ENCODE measurements at regions of chrX and their contacts with region 1.

Region 1: GRCh38 chrX:22041907-22042530 is 9.9 kb downstream of the PHEX start:
- DNase-seq: no peak
- H3K4me3 ChIP-seq: no peak overlapping the region
- H3K4me3 Mint-ChIP-seq: no peak overlapping the region
- H3K27ac ChIP-seq: no peak overlapping the region
- H3K27ac Mint-ChIP-seq: no peak overlapping the region
- H3K4me1 ChIP-seq: no peaks in the 10 kb centered on the region
- H3K4me1 Mint-ChIP-seq: peaks cover 4% of the 10 kb centered on the region
- H3K27me3 ChIP-seq: no peaks in the 10 kb centered on the region
- H3K27me3 Mint-ChIP-seq: peaks cover 1 to 16% (median 3%) of the 10 kb centered on the region in 3 donors
- CTCF ChIP-seq: no peak

Region 2: DNA sequence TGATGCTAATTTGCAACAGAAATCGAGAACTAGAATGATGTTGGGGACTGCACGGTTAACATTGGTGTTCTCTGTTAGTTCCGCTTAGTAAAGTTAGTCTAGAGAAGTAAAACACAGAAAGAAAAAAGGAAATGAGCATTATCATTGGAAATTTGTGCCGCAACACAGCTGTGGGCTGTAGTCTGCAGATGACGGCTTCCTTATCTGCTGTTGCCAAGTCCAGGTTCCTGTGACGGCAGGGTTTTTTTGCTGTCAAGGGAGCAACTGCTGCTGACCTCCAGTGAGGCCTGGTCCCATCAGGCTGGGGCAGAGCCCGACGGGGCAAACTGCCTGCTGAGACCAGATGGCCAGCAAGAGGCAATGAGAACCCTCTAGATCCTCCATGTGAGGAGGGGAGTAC is 48.8 kb before region 1 on chrX:
- intact Hi-C with region 1: loop called in 1 of 2 experiments (anchors 10 kb)
- DNase-seq: peak; percentile 84 to 87 (median 85)
- H3K4me3 ChIP-seq: no peak overlapping the region
- H3K4me3 Mint-ChIP-seq: no peak overlapping the region
- H3K27ac ChIP-seq: peak overlapping the region; percentile 89 to 97
- H3K27ac Mint-ChIP-seq: peak overlapping the region; percentile 93 to 98 (median 96)
- H3K4me1 ChIP-seq: peaks cover 66 to 71% of the 10 kb centered on the region in 2 donors
- H3K4me1 Mint-ChIP-seq: peaks cover 68% of the 10 kb centered on the region
- H3K27me3 ChIP-seq: no peaks in the 10 kb centered on the region
- H3K27me3 Mint-ChIP-seq: peaks cover 0 to 12% (median 0%) of the 10 kb centered on the region in 3 donors
- CTCF ChIP-seq: no peak

Region 3: DNA sequence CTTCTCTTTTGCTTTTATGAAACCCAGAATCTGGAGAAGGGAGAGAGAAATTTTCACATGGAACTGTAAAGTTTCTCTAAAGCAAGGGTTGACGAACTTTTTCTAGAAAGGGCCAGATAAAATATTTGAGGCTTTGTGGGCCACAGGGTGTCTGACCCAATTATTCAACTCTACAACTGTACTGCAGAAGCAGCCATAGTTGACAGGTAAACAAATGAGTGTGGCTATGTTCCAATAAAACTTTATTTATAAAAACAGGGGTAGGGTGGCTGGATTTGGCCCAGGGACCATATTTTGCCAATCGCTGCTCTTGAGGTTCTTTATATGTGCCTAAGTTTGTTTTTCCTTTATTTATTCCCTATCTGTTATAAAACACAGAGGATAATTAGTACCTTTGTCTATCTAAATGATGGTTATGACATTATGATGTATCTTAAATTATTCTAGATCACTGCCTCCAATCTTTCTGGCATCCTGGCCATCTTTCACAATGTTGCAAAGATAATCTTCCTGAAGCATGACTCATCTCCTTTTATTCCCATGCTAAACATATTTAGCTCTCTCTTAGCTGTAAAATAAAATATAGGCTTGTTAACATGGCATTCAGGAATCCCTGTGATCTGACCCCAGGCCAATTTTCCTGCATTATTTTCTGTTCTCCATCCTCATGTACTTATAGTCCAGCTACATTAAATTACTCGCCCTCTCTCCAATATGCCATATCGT is 123.9 kb after region 1 on chrX:
- intact Hi-C with region 1: no loop called
- DNase-seq: no peak
- H3K4me3 ChIP-seq: no peak overlapping the region
- H3K4me3 Mint-ChIP-seq: no peak overlapping the region
- H3K27ac ChIP-seq: no peak overlapping the region
- H3K27ac Mint-ChIP-seq: no peak overlapping the region
- H3K4me1 ChIP-seq: no peaks in the 10 kb centered on the region
- H3K4me1 Mint-ChIP-seq: no peaks in the 10 kb centered on the region
- H3K27me3 ChIP-seq: no peaks in the 10 kb centered on the region
- H3K27me3 Mint-ChIP-seq: peaks cover 0 to 8% (median 2%) of the 10 kb centered on the region in 3 donors
- CTCF ChIP-seq: no peak